Uterus (tissue), 4 donors: ENCODE measurements at regions of chr2 and their contacts with region 1.

Region 1: GRCh38 chr2:101823347-101823791 is 125.9 kb downstream of the MAP4K4 start:
- DNase-seq: peak; percentile 38 to 52
- H3K4me3 ChIP-seq: no peak overlapping the region
- H3K27ac ChIP-seq: no peak overlapping the region
- H3K4me1 ChIP-seq: peaks cover 5 to 6% of the 10 kb centered on the region in 2 donors
- H3K27me3 ChIP-seq: no peaks in the 10 kb centered on the region
- CTCF ChIP-seq: peak; percentile 32 to 49 (median 44)
- POLR2A ChIP-seq: no peak

Region 2: DNA sequence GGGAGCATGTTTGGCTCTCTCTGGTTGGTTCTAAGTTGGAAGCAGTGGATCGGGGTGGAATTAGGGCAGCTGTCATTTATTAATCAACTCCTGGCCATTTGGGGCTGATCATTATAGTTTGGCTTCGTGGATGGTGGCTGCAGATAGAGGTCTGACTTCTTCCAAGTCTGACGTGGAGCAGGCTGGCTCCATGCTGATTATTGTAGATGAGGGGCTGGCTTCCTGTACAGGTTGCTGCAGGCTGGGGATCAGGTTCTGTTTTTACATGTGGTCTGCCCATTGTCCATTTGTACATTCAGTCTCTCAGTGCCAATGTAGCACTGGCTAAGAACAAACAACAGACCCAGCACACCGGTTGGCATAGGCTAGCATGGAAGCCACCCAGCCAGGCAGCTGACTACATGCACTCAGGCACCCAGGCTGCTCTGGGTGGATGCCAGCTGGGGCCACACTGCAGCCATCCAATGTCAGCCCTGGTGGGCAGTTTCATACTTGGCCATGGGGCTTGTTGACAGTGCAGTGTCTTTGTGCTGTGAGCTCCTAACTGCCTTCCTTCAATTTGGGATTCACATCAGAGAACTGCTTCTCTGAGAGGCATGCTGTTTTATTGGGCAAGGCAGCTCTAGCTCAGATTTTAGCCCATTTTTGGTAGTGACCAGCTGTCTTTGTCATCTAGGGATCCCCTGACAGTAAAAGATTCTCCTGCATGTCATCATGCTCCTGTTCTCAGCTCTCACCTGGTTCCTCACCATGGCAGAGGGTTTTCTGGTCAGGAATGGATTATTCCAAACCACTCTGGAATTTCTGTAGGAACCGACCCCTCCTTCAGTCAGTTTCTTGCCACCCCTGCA is 978.0 kb before region 1 on chr2:
- intact Hi-C with region 1: loop called (anchors 10 kb)
- DNase-seq: no peak
- H3K4me3 ChIP-seq: no peak overlapping the region
- H3K27ac ChIP-seq: no peak overlapping the region
- H3K4me1 ChIP-seq: no peaks in the 10 kb centered on the region
- H3K27me3 ChIP-seq: no peaks in the 10 kb centered on the region
- CTCF ChIP-seq: no peak
- POLR2A ChIP-seq: no peak

Region 3: GRCh38 chr2:101697124-101698013 is 126.0 kb before region 1 on chr2 and contains the start of gene MAP4K4:
- intact Hi-C with region 1: loop called (anchors 5 kb)
- DNase-seq: peak; percentile 84 to 86
- H3K4me3 ChIP-seq: peak within 1 kb of the TSS; percentile 48 to 85
- H3K27ac ChIP-seq: peak within 1 kb of the TSS; percentile 93 to 96
- H3K4me1 ChIP-seq: peaks cover 4 to 14% of the 10 kb centered on the region in 2 donors
- H3K27me3 ChIP-seq: no peaks in the 10 kb centered on the region
- CTCF ChIP-seq: peak; percentile 26 to 57 (median 41)
- POLR2A ChIP-seq: peak in 1 of 2 donors; percentile 49
- total RNA-seq, gene MAP4K4: 17.9 to 87.2 (median 55.4) TPM